OCI-LY7 (cell line): ENCODE measurements at regions of chr7 and their contacts with region 1.

Region 1: GRCh38 chr7:108497082-108497725 is 28.7 kb downstream of the PNPLA8 start:
- DNase-seq: peak; percentile 77
- H3K4me3 ChIP-seq: no peak overlapping the region
- H3K27ac ChIP-seq: no peak overlapping the region
- H3K4me1 ChIP-seq: peaks cover 7% of the 10 kb centered on the region
- CTCF ChIP-seq: peak; percentile 97

Region 2: DNA sequence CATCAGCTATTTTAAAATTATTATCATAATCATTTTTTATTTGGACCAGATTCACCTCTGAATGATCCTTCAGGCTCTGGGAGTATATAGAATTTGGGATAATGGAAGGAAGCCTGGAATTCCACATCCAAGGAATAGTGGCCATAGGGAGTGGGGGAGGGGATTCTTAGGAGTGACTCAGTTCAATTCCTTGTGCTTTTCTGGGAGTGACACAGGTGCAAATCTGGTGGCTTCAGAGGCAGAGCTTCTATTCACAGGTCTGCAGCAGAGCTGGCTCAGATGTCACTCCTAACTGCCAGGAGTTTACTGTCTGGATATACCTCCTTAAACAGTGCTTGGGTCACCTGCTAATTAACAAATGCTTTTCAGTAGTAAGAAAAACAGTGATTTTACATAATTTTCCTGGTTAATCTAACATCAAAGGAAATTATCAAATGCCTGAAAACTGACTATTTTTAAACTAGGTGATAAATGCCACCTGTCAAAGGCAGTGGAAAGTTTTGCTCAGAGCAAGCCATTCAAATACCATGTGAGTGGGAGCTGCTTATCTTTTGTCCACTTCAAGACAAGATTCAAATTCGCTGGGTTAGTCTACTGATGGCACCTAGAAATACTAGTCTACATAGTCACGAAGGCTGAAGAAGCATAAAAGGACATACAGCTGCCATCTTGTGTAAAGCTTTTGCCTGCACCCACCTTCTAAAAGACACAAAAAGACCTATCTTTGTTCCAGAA is 260.4 kb before region 1 on chr7:
- CTCF ChIA-PET with region 1: no interaction called
- POLR2A ChIA-PET with region 1: no interaction called
- intact Hi-C with region 1: no loop called
- DNase-seq: no peak
- H3K4me3 ChIP-seq: no peak overlapping the region
- H3K27ac ChIP-seq: no peak overlapping the region
- H3K4me1 ChIP-seq: no peaks in the 10 kb centered on the region
- CTCF ChIP-seq: no peak

Region 3: DNA sequence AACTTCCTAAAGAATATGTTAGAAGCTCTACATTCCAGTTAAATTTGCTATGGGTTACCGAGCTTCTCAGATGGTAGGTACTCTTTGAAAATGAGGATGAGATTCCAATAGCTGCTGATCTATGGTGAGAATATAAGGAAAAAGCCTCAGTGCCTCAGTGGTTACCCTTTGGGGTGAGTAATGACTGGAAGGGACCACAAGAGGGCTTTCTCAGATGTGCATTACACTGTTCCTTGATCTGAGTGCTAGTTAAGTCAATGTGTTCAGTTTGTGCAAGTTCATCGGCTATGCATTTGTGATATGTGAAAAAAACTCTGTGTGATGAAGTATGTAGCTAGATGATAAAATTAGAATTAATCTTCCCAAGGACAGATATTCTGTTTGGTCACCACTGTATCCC is 44.5 kb before region 1 on chr7:
- CTCF ChIA-PET with region 1: interaction called, 5 read pairs
- POLR2A ChIA-PET with region 1: no interaction called
- intact Hi-C with region 1: loop called (anchors 2 kb)
- DNase-seq: peak; percentile 45
- H3K4me3 ChIP-seq: no peak overlapping the region
- H3K27ac ChIP-seq: no peak overlapping the region
- H3K4me1 ChIP-seq: no peaks in the 10 kb centered on the region
- CTCF ChIP-seq: peak; percentile 77